Breast epithelium (tissue), 4 donors: ENCODE measurements at regions of chr5 and their contacts with region 1.

Region 1: GRCh38 chr5:162372256-162372655 is 304.7 kb downstream of the GABRG2 start:
- DNase-seq: no peak
- H3K4me3 ChIP-seq: no peak overlapping the region
- H3K27ac ChIP-seq: no peak overlapping the region
- H3K4me1 ChIP-seq: no peaks in the 10 kb centered on the region
- H3K27me3 ChIP-seq: no peaks in the 10 kb centered on the region
- CTCF ChIP-seq: no peak
- POLR2A ChIP-seq: no peak

Region 2: GRCh38 chr5:162323471-162323870 is 48.8 kb before region 1 on chr5:
- intact Hi-C with region 1: loop called (anchors 2 kb)
- DNase-seq: no peak
- H3K4me3 ChIP-seq: no peak overlapping the region
- H3K27ac ChIP-seq: no peak overlapping the region
- H3K4me1 ChIP-seq: no peaks in the 10 kb centered on the region
- H3K27me3 ChIP-seq: no peaks in the 10 kb centered on the region
- CTCF ChIP-seq: no peak
- POLR2A ChIP-seq: no peak

Region 3: DNA sequence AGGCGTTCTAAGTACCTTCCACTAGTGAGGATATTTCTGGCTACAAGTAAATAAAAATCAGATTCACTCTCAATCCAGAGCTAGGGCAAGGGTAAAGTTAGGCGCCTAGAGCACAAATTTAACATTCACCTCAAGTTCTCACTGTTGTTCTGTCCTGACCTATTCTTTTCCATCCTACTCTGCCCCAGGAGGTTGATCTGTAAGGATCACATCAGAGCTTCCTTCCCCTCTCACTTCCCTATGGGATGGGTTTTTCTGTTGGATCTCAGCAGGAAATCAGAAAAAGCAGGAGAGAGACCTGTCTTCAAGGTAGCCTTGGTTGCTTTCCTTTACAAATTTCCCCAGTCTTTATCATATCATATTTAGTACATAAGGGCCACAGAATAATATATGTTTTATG is 12.0 kb after region 1 on chr5:
- intact Hi-C with region 1: loop called (anchors 2 kb)
- DNase-seq: no peak
- H3K4me3 ChIP-seq: no peak overlapping the region
- H3K27ac ChIP-seq: no peak overlapping the region
- H3K4me1 ChIP-seq: no peaks in the 10 kb centered on the region
- H3K27me3 ChIP-seq: peaks cover 0 to 4% of the 10 kb centered on the region in 2 donors
- CTCF ChIP-seq: no peak
- POLR2A ChIP-seq: no peak